GM18951 (cell line): ENCODE measurements at regions of chr17 and their contacts with region 1.

Region 1: GRCh38 chr17:27805520-27806146 is 5.3 kb upstream of the NOS2 start:
- POLR2A ChIP-seq: no peak

Region 2: DNA sequence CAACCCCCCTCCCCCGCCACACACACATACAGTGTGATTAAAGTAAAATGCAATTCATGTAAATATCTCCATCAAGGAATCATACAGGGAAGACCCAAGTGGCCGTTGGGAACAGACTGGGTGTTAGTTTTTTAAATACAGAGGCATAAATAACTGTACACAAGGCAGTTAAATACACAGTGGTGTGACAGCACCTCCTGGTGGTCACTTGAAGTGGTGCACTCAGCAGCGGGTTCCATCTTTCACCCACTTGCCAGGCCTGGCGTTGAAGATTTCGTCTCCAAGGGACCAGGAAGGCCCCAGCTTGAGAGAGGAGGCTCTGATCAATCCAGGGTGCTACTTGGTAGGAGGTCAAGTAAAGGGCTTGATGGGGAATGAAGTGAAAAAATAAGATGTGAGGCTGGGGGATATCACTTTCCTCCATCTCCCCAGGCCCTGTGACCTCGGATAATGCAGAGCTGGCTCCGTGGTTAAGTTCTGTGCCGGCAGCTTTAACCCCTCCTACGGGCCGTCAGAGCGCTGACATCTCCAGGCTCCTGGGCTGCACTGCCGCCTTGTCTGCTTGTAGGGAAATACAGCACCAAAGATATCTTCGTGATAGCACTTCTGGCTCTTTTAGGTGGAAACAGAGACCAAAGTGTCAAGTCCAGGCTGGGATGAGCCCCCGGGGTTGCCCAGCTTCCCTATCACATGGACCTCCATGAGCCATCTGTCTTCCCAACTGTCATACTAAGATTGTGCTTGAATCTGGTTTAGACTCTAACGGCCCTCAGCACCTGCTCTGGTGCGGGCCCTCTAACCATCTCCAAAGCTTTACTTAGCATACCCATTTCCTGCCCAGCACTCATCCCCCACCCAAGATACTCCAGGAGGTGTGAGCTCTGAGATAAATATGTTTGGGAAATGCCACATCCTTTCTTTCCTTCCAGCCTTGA is 154.0 kb before region 1 on chr17:
- in situ Hi-C with region 1: no loop called
- POLR2A ChIP-seq: no peak

Region 3: GRCh38 chr17:27879987-27880608 is 74.5 kb after region 1 on chr17:
- in situ Hi-C with region 1: loop called (anchors 10 kb)
- POLR2A ChIP-seq: no peak